GM18951 (cell line): ENCODE measurements at regions of chr14 and their contacts with region 1.

Region 1: DNA sequence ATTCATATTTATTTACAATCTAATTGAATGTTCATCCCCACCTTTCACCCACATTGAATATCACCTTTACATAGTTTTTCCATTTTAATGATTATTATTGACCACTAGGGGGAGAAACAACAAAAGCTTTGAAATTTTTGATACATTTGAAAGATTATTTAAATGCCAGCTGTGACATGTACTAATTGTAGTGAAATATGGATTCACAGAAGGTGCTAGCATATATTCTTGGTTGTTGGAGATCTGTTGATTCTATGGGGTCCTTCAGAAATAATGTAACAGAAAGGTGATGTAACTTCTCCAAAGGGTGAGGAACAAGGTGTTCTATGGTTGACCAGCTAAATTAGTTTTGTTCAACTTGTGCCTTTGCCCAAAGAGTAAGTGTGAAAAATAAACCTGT is 22.4 kb upstream of the GPR33 start:
- POLR2A ChIP-seq: no peak

Region 2: GRCh38 chr14:31692376-31692781 is 182.2 kb after region 1 on chr14:
- in situ Hi-C with region 1: no loop called
- POLR2A ChIP-seq: no peak

Region 3: DNA sequence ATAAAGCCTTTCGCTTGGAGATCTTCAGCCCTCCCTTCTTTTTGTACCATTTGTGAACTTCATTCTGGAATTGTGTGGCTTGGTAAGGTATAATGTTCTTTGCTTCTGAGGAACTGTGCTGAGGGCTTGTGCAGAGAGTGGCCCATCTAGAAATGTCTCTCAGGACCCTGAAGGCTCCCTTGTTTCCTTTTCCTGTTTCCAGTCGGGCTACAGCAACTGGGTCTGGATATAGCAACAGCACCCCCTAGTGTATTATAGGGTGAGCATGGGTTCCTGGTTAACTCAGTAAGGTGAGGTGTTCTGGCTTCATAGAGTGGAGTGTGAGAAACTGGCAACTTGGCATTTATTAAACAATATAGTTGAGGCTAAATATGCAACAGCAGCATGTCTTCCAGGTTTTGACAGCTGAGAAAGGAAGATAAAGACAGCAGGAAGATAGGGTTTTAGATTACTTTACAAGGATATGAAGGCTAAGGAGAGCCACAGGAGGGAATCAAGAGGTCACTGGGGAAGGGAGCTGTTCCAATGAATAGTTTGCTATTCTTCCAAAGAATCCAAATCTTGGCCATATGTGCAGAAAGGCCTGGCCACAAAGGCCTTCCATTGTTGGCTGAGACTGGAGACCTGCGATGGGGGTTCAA is 741.9 kb after region 1 on chr14:
- in situ Hi-C with region 1: loop called (anchors 25 kb)
- POLR2A ChIP-seq: no peak